B cell (primary cell): ENCODE measurements at regions of chr10 and their contacts with region 1.

Region 1: DNA sequence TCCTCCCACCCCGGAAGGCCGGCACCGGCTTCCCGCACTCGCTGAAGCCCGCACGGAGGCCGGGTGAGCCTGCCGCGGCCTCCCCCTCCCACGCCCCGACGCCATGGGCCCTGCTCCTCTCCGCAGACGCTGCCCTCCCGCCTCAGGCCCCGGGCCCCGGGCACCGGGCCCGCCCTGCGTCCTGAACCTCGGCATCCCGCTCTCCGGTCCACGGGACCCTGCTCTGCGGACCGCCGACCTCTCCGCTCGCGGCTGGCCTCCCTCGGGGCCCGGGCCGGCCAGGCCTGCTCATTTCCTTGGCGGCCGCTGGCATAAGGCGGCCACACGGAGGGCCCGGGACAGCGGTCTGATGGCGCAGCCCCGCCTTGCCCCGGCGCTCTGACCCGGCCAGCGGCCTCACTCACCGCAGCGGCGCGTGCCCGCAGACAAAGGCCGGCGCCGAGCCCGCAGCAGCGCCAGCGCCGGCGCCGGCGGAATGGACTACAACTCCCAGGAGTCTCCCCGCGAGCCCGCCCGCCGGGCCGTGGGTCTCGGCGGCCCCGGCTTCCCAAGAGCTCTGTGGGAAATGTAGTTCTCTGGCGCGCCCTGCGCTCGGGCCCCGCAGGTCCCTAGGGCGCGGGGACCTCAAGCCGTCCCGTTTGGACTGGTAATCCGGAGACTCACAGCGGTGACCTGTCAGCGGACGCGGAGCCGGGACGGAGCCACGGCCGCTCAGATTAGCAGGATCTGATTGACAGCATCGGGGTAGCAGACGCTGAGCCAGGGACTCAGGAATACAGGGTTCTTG is at the start of gene ZNF32:
- DNase-seq: peak; percentile 89
- ATAC-seq: peak; percentile 99
- H3K4me3 ChIP-seq: peak within 1 kb of the TSS; percentile 22 to 82 (median 63)
- H3K4me3 Mint-ChIP-seq: peak within 1 kb of the TSS; percentile 98
- H3K27ac ChIP-seq: peak within 1 kb of the TSS in 1 of 2 donors; percentile 86
- H3K27ac Mint-ChIP-seq: peak within 1 kb of the TSS; percentile 89
- H3K4me1 ChIP-seq: peaks cover 7 to 13% of the 10 kb centered on the region in 2 donors
- H3K4me1 Mint-ChIP-seq: peaks cover 16% of the 10 kb centered on the region
- H3K27me3 ChIP-seq: peaks cover 0 to 6% (median 0%) of the 10 kb centered on the region in 4 experiments
- H3K27me3 Mint-ChIP-seq: peaks cover 10% of the 10 kb centered on the region
- CTCF ChIP-seq: no peak
- total RNA-seq, gene ZNF32: 29.6 and 35.8 TPM in 2 replicates

Region 2: GRCh38 chr10:42782446-42783180 is 866.0 kb before region 1 on chr10 and contains the start of gene BMS1:
- CTCF ChIA-PET with region 1: no interaction called
- POLR2A ChIA-PET with region 1: no interaction called
- intact Hi-C with region 1: loop called (anchors 5 kb)
- DNase-seq: peak; percentile 92
- ATAC-seq: peak; percentile 86
- H3K4me3 ChIP-seq: peak within 1 kb of the TSS; percentile 70 to 93 (median 85)
- H3K4me3 Mint-ChIP-seq: peak within 1 kb of the TSS; percentile 96
- H3K27ac ChIP-seq: peak within 1 kb of the TSS; percentile 77 to 81
- H3K27ac Mint-ChIP-seq: peak within 1 kb of the TSS; percentile 89
- H3K4me1 ChIP-seq: peaks cover 12 to 13% of the 10 kb centered on the region in 2 donors
- H3K4me1 Mint-ChIP-seq: peaks cover 24% of the 10 kb centered on the region
- H3K27me3 ChIP-seq: no peaks in the 10 kb centered on the region
- H3K27me3 Mint-ChIP-seq: peaks cover 6% of the 10 kb centered on the region
- CTCF ChIP-seq: no peak
- total RNA-seq, gene BMS1: 17.1 and 17.5 TPM in 2 replicates

Region 3: DNA sequence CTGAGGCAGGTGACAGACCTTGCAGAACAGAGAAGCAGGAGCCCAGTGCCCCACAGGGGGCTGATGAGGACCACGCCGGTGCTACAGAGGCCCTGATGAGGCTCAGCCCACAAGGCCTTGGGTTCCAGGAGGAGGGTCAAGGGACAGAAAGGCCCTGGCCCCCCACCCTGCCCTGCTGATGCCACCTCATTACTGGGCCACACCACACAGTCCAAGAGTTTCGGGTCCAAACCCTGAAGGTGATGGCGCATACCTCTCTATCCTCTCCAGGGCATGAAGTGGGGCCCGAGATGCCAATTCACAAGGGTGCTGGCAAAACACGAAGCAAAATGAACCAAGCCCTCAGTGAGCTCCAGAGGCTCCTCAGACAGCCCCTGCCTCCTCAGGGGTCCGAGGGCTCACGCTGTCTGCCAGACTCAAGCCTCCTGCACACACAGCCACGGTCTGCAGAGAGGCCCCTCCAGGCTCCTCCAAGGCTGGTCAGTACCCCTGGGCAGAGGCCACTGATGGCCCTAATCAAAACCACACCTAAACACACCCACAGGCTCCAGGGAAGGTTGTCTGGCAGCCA is 414.0 kb before region 1 on chr10:
- CTCF ChIA-PET with region 1: no interaction called
- POLR2A ChIA-PET with region 1: no interaction called
- intact Hi-C with region 1: no loop called
- DNase-seq: no peak
- ATAC-seq: no peak
- H3K4me3 ChIP-seq: no peak overlapping the region
- H3K4me3 Mint-ChIP-seq: no peak overlapping the region
- H3K27ac ChIP-seq: no peak overlapping the region
- H3K27ac Mint-ChIP-seq: no peak overlapping the region
- H3K4me1 ChIP-seq: peaks cover 15 to 20% of the 10 kb centered on the region in 2 donors
- H3K4me1 Mint-ChIP-seq: peaks cover 15% of the 10 kb centered on the region
- H3K27me3 ChIP-seq: peaks cover 0 to 11% (median under 1%) of the 10 kb centered on the region in 4 experiments
- H3K27me3 Mint-ChIP-seq: peaks cover 16% of the 10 kb centered on the region
- CTCF ChIP-seq: no peak

Region 4: DNA sequence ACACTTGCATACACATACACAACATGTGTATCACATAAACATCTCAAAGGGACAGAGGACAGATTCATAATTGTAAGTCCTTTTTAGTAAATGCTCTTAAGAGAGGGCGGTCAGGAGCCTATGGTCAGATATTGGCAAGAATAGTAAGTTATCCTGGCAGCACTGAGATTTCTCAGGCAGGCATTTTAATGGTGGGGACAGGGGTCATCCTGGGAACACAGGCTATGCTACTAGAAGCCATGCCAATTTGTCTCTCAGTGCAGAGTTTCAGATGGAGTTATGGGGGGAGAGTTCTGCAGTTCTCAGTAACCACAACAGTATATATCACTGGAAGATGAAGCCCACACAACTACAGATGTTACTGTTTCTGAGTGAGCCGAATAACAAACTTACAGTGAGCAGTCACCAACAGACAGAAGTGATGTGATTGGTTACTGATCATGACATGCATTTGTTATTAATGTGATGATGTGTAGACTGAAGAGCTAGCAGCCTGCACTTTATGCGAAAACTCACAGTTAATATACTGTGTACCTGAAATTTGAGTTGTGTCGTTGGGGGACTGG is 195.2 kb before region 1 on chr10:
- CTCF ChIA-PET with region 1: no interaction called
- POLR2A ChIA-PET with region 1: no interaction called
- intact Hi-C with region 1: loop called (anchors 2 kb)
- DNase-seq: no peak
- ATAC-seq: no peak
- H3K4me3 ChIP-seq: no peak overlapping the region
- H3K4me3 Mint-ChIP-seq: peak overlapping the region; percentile 83
- H3K27ac ChIP-seq: peak overlapping the region; percentile 85 to 90
- H3K27ac Mint-ChIP-seq: peak overlapping the region; percentile 98
- H3K4me1 ChIP-seq: peaks cover 47 to 71% of the 10 kb centered on the region in 2 donors
- H3K4me1 Mint-ChIP-seq: peaks cover 48% of the 10 kb centered on the region
- H3K27me3 ChIP-seq: no peaks in the 10 kb centered on the region
- H3K27me3 Mint-ChIP-seq: no peaks in the 10 kb centered on the region
- CTCF ChIP-seq: no peak

Region 5: GRCh38 chr10:43606322-43607198 is 42.0 kb before region 1 on chr10 and contains the start of gene ZNF485:
- CTCF ChIA-PET with region 1: no interaction called
- POLR2A ChIA-PET with region 1: no interaction called
- intact Hi-C with region 1: loop called (anchors 1 kb)
- DNase-seq: peak; percentile 71
- ATAC-seq: peak; percentile 95
- H3K4me3 ChIP-seq: peak within 1 kb of the TSS; percentile 49 to 86 (median 71)
- H3K4me3 Mint-ChIP-seq: peak within 1 kb of the TSS; percentile 78
- H3K27ac ChIP-seq: peak within 1 kb of the TSS in 1 of 2 donors; percentile 56
- H3K27ac Mint-ChIP-seq: peak within 1 kb of the TSS; percentile 72
- H3K4me1 ChIP-seq: peaks cover 10% of the 10 kb centered on the region in 2 donors
- H3K4me1 Mint-ChIP-seq: peaks cover 18% of the 10 kb centered on the region
- H3K27me3 ChIP-seq: no peaks in the 10 kb centered on the region
- H3K27me3 Mint-ChIP-seq: peaks cover 4% of the 10 kb centered on the region
- CTCF ChIP-seq: no peak
- total RNA-seq, gene ZNF485: 8.4 and 9.5 TPM in 2 replicates

Region 6: GRCh38 chr10:43983856-43984271 is 335.3 kb after region 1 on chr10:
- CTCF ChIA-PET with region 1: no interaction called
- POLR2A ChIA-PET with region 1: no interaction called
- intact Hi-C with region 1: no loop called
- DNase-seq: no peak
- ATAC-seq: no peak
- H3K4me3 ChIP-seq: no peak overlapping the region
- H3K4me3 Mint-ChIP-seq: no peak overlapping the region
- H3K27ac ChIP-seq: no peak overlapping the region
- H3K27ac Mint-ChIP-seq: no peak overlapping the region
- H3K4me1 ChIP-seq: no peaks in the 10 kb centered on the region
- H3K4me1 Mint-ChIP-seq: no peaks in the 10 kb centered on the region
- H3K27me3 ChIP-seq: no peaks in the 10 kb centered on the region
- H3K27me3 Mint-ChIP-seq: no peaks in the 10 kb centered on the region
- CTCF ChIP-seq: no peak

Region 7: GRCh38 chr10:44008270-44008916 is 359.8 kb after region 1 on chr10:
- CTCF ChIA-PET with region 1: no interaction called
- POLR2A ChIA-PET with region 1: no interaction called
- intact Hi-C with region 1: no loop called
- DNase-seq: no peak
- ATAC-seq: no peak
- H3K4me3 ChIP-seq: no peak overlapping the region
- H3K4me3 Mint-ChIP-seq: no peak overlapping the region
- H3K27ac ChIP-seq: no peak overlapping the region
- H3K27ac Mint-ChIP-seq: no peak overlapping the region
- H3K4me1 ChIP-seq: no peaks in the 10 kb centered on the region
- H3K4me1 Mint-ChIP-seq: no peaks in the 10 kb centered on the region
- H3K27me3 ChIP-seq: no peaks in the 10 kb centered on the region
- H3K27me3 Mint-ChIP-seq: no peaks in the 10 kb centered on the region
- CTCF ChIP-seq: no peak

Region 8: GRCh38 chr10:45008524-45009161 is 1360.1 kb after region 1 on chr10:
- CTCF ChIA-PET with region 1: no interaction called
- POLR2A ChIA-PET with region 1: no interaction called
- intact Hi-C with region 1: loop called (anchors 10 kb)
- DNase-seq: peak; percentile 71
- ATAC-seq: peak; percentile 58
- H3K4me3 ChIP-seq: no peak overlapping the region
- H3K4me3 Mint-ChIP-seq: no peak overlapping the region
- H3K27ac ChIP-seq: no peak overlapping the region
- H3K27ac Mint-ChIP-seq: no peak overlapping the region
- H3K4me1 ChIP-seq: peaks cover 0 to 4% of the 10 kb centered on the region in 2 donors
- H3K4me1 Mint-ChIP-seq: peaks cover 2% of the 10 kb centered on the region
- H3K27me3 ChIP-seq: no peaks in the 10 kb centered on the region
- H3K27me3 Mint-ChIP-seq: no peaks in the 10 kb centered on the region
- CTCF ChIP-seq: peak; percentile 88